ENCODE measurements at regions of chr2 and their contacts with region 1.

Region 1: DNA sequence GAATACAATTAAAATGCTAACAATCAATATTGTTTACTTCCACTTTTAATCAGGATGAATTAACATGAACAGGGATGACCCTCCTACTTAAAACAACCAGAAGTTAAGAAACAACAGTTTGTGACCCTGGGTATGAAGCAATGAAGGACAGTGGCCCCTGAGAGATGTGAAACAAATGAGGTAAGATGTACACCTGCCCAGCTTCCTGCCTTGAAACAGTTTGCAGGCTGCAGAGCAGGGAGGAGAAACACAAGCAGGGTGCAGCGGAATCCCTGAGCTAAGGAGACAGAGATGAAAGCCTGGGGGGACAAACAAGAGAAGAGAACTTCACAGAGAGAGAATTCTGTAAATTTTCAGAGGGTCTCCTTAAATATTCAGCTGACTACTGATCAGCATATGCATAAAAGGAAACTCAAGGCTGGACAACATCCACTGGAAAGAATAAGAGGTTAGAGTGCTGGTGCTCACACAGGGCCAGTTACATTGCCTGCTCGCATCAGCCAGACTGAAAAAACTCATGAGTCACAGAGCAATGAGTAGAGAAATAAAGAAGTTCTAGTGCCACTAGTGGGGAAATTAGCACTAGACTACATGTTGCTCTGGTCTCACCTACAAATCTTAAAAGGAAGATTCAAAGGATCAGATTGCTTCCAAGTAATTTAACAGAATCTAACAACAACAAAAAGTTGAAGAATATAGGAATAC is 106.4 kb downstream of the PID1 start:
- DNase-seq: no peak
- H3K4me3 ChIP-seq: no peak overlapping the region
- H3K27ac ChIP-seq: no peak overlapping the region
- H3K4me1 ChIP-seq: peaks cover 0 to 27% (median 0%) of the 10 kb centered on the region in 4 donors
- H3K27me3 ChIP-seq: no peaks in the 10 kb centered on the region
- CTCF ChIP-seq: no peak

Region 2: DNA sequence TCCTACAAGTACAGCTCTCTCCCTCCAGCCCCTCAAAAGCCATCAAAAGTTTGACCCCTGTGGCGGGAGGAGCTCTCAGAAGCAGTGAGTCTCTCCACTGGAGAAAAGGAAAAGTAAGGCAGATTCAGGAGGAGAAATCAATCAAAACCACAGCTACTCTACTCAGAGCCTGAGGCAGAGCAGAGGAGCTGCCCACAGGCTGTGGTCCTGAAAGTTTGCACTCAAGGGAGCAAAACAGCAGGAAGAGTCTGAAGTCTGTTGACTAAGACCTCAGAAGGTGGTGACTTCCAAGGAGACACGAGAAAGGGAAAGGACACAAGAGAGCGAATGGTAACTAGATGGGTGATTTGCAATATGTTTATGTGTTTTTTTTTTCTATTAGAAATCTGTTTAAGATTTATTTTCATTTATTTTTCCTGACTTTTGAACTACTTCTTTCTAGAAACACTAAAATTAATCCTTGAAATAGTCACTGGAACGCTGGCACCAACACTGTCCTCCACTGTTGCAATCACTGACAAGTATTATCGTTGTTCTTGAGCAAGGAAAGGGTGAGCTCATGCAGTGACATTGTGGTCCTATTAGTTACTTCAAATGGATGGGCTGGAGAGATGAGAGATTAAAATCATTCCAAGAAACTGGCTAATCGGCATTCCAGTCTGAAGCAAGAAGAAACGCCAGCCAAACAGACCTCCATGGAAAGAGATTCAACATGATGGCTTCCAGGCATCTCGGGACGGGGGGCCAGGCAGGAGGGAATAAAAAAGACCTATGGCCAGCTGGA is 70.6 kb after region 1 on chr2:
- intact Hi-C with region 1: no loop called
- DNase-seq: peak in 1 of 2 donors; percentile 42
- H3K4me3 ChIP-seq: no peak overlapping the region
- H3K27ac ChIP-seq: no peak overlapping the region
- H3K4me1 ChIP-seq: no peaks in the 10 kb centered on the region
- H3K27me3 ChIP-seq: no peaks in the 10 kb centered on the region
- CTCF ChIP-seq: no peak

Region 3: GRCh38 chr2:229731916-229732315 is 567.2 kb after region 1 on chr2:
- intact Hi-C with region 1: loop called (anchors 5 kb)
- DNase-seq: no peak
- H3K4me3 ChIP-seq: no peak overlapping the region
- H3K27ac ChIP-seq: no peak overlapping the region
- H3K4me1 ChIP-seq: peaks cover 0 to 2% (median 0%) of the 10 kb centered on the region in 4 donors
- H3K27me3 ChIP-seq: peaks cover 0 to 2% of the 10 kb centered on the region in 2 donors
- CTCF ChIP-seq: no peak

Region 4: GRCh38 chr2:230496891-230497290 is 1332.2 kb after region 1 on chr2:
- intact Hi-C with region 1: no loop called
- DNase-seq: no peak
- H3K4me3 ChIP-seq: no peak overlapping the region
- H3K27ac ChIP-seq: no peak overlapping the region
- H3K4me1 ChIP-seq: no peaks in the 10 kb centered on the region
- H3K27me3 ChIP-seq: no peaks in the 10 kb centered on the region
- CTCF ChIP-seq: no peak

Measured in tibial artery (tissue), 4 donors.